CD8-positive, alpha-beta T cell (primary cell): ENCODE measurements at regions of chr16 and their contacts with region 1.

Region 1: GRCh38 chr16:74666425-74667254 is at the start of gene RFWD3:
- DNase-seq: peak; percentile 91 to 99 (median 95)
- ATAC-seq: peak; percentile 98
- H3K4me3 ChIP-seq: peak within 1 kb of the TSS; percentile 80 to 98
- H3K4me3 Mint-ChIP-seq: peak within 1 kb of the TSS; percentile 94
- H3K27ac ChIP-seq: peak within 1 kb of the TSS; percentile 85 to 90
- H3K27ac Mint-ChIP-seq: peak within 1 kb of the TSS; percentile 94
- H3K4me1 ChIP-seq: peaks cover 30% of the 10 kb centered on the region
- H3K4me1 Mint-ChIP-seq: peaks cover 36% of the 10 kb centered on the region
- H3K27me3 ChIP-seq: no peaks in the 10 kb centered on the region
- H3K27me3 Mint-ChIP-seq: no peaks in the 10 kb centered on the region
- CTCF ChIP-seq: no peak
- total RNA-seq, gene RFWD3: 43.7 to 49.7 TPM

Region 2: GRCh38 chr16:72664509-72665225 is 2002.0 kb before region 1 on chr16:
- CTCF ChIA-PET with region 1: no interaction called
- POLR2A ChIA-PET with region 1: no interaction called
- intact Hi-C with region 1: loop called in 1 of 2 experiments (anchors 10 kb)
- DNase-seq: peak; percentile 87 to 98 (median 93)
- ATAC-seq: peak; percentile 98
- H3K4me3 ChIP-seq: peak overlapping the region; percentile 81 to 93
- H3K4me3 Mint-ChIP-seq: peak overlapping the region; percentile 100
- H3K27ac ChIP-seq: peak overlapping the region; percentile 59 to 77
- H3K27ac Mint-ChIP-seq: peak overlapping the region; percentile 98
- H3K4me1 ChIP-seq: peaks cover 14% of the 10 kb centered on the region
- H3K4me1 Mint-ChIP-seq: peaks cover 24% of the 10 kb centered on the region
- H3K27me3 ChIP-seq: no peaks in the 10 kb centered on the region
- H3K27me3 Mint-ChIP-seq: no peaks in the 10 kb centered on the region
- CTCF ChIP-seq: no peak

Region 3: DNA sequence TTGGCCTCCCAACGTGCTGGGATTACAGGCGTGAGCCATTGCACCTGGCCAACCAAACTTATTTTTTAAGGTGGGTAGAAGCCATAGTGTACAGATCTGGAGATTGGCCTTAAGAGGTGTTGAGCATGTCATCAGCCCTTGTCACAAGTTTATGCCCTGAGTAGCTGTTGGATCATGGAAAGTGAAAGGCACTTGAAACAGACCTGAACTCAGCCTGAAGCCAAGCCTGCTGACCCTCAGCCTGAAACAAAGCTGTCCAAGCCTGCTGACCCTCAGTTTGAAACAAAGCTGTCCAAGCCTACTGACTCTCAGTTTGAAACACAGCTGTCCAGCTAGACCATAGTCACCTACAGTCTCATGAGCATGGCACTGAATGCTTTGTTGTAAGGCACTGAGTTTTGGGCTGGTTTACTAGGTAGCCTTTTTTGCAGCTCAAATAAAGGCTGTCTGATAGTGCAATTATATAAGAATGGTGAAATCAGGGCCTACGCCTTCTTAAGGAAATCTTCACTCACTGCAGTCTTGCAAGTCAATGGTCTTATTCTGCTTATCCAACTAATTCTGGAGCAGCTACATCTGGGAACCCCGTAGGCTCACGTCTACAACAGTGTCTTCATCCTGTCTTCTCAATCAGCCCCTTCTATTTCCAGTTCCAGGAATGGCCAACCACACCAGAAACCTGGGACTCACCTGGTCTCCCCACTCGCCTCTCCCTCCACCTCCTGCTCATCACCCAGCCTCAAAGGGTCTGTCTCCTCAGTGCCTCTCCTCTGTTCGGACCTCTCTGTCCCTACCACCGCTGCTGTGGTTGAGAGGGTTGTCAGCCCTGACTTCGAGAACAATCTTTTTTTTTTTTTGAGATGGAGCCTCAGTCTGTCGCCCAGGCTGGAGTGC is 293.4 kb before region 1 on chr16:
- CTCF ChIA-PET with region 1: no interaction called
- POLR2A ChIA-PET with region 1: no interaction called
- intact Hi-C with region 1: loop called in 1 of 2 experiments (anchors 5 kb)
- DNase-seq: no peak
- ATAC-seq: no peak
- H3K4me3 ChIP-seq: no peak overlapping the region
- H3K4me3 Mint-ChIP-seq: no peak overlapping the region
- H3K27ac ChIP-seq: no peak overlapping the region
- H3K27ac Mint-ChIP-seq: no peak overlapping the region
- H3K4me1 ChIP-seq: no peaks in the 10 kb centered on the region
- H3K4me1 Mint-ChIP-seq: peaks cover 2% of the 10 kb centered on the region
- H3K27me3 ChIP-seq: no peaks in the 10 kb centered on the region
- H3K27me3 Mint-ChIP-seq: no peaks in the 10 kb centered on the region
- CTCF ChIP-seq: no peak

Region 4: GRCh38 chr16:74695450-74696422 is 29.1 kb after region 1 on chr16:
- CTCF ChIA-PET with region 1: interaction called, 3 read pairs
- POLR2A ChIA-PET with region 1: interaction called, 20 read pairs
- intact Hi-C with region 1: loop called in 1 of 2 experiments (anchors 1 kb)
- DNase-seq: peak; percentile 18 to 85 (median 57)
- ATAC-seq: peak; percentile 71
- H3K4me3 ChIP-seq: peak overlapping the region; percentile 21 to 28
- H3K4me3 Mint-ChIP-seq: peak overlapping the region; percentile 78
- H3K27ac ChIP-seq: no peak overlapping the region
- H3K27ac Mint-ChIP-seq: peak overlapping the region; percentile 70
- H3K4me1 ChIP-seq: peaks cover 18% of the 10 kb centered on the region
- H3K4me1 Mint-ChIP-seq: peaks cover 55% of the 10 kb centered on the region
- H3K27me3 ChIP-seq: no peaks in the 10 kb centered on the region
- H3K27me3 Mint-ChIP-seq: no peaks in the 10 kb centered on the region
- CTCF ChIP-seq: no peak

Region 5: DNA sequence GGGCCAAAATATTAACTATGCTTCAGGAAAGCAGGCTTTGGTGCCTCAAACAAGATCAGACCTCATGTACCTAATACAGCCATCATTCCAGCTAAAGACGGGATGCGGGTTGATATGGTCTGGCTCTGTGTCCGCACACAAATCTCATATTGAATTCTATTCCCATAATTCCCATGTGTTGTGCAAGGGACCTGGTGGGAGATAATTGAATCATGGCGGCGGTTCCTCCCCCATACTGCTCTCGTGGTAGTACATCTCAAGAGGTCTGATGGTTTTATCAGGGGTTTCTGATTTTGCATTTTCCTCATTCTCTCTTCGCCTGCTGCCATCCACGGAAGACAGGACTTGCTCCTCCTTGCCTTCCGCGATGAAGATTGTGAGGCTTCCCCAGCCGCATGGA is 847.7 kb after region 1 on chr16:
- CTCF ChIA-PET with region 1: no interaction called
- POLR2A ChIA-PET with region 1: no interaction called
- intact Hi-C with region 1: loop called in 1 of 2 experiments (anchors 5 kb)
- DNase-seq: no peak
- ATAC-seq: no peak
- H3K4me3 ChIP-seq: no peak overlapping the region
- H3K4me3 Mint-ChIP-seq: no peak overlapping the region
- H3K27ac ChIP-seq: no peak overlapping the region
- H3K27ac Mint-ChIP-seq: no peak overlapping the region
- H3K4me1 ChIP-seq: peaks cover 4% of the 10 kb centered on the region
- H3K4me1 Mint-ChIP-seq: peaks cover 17% of the 10 kb centered on the region
- H3K27me3 ChIP-seq: no peaks in the 10 kb centered on the region
- H3K27me3 Mint-ChIP-seq: no peaks in the 10 kb centered on the region
- CTCF ChIP-seq: no peak

Region 6: GRCh38 chr16:75566040-75566810 is 899.6 kb after region 1 on chr16 and contains the start of gene GABARAPL2:
- CTCF ChIA-PET with region 1: no interaction called
- POLR2A ChIA-PET with region 1: no interaction called
- intact Hi-C with region 1: loop called in 1 of 2 experiments (anchors 2 kb)
- DNase-seq: peak; percentile 84 to 96 (median 91)
- ATAC-seq: peak; percentile 72
- H3K4me3 ChIP-seq: peak within 1 kb of the TSS; percentile 87 to 98
- H3K4me3 Mint-ChIP-seq: peak within 1 kb of the TSS; percentile 94
- H3K27ac ChIP-seq: peak within 1 kb of the TSS; percentile 81 to 90
- H3K27ac Mint-ChIP-seq: peak within 1 kb of the TSS; percentile 97
- H3K4me1 ChIP-seq: peaks cover 12% of the 10 kb centered on the region
- H3K4me1 Mint-ChIP-seq: peaks cover 46% of the 10 kb centered on the region
- H3K27me3 ChIP-seq: peaks cover 0 to 3% of the 10 kb centered on the region in 2 experiments
- H3K27me3 Mint-ChIP-seq: peaks cover 15% of the 10 kb centered on the region
- CTCF ChIP-seq: no peak
- total RNA-seq, gene GABARAPL2: 37.4 to 39.4 TPM